Left cardiac atrium (tissue), 4 donors: ENCODE measurements at regions of chr1 and their contacts with region 1.

Region 1: GRCh38 chr1:62082456-62083363 is 111.9 kb upstream of the L1TD1 start:
- DNase-seq: peak; percentile 26
- ATAC-seq: peak in 1 of 2 donors; percentile 62

Region 2: GRCh38 chr1:61797045-61797755 is 285.5 kb before region 1 on chr1:
- intact Hi-C with region 1: no loop called
- DNase-seq: no peak
- ATAC-seq: no peak

Region 3: DNA sequence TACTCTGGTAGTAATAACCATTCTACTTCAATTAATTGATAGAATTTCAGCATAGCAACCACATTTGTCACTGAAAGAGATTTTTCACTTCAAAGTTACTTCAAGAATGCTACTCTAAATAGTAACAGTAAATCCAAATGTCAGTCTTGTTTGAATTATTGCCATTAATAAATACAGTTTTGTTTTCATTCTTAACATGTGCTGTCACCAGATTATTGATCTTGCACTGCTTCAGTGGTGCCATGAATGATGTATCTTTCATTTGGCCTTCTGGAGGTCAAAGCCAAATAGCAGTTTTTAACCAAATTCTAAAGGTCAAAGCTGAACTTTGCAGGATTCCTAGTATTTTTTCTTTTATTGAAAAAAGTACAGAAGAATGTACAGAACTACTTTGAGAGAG is 140.9 kb before region 1 on chr1:
- intact Hi-C with region 1: loop called in 1 of 2 experiments (anchors 10 kb)
- DNase-seq: no peak
- ATAC-seq: no peak

Region 4: GRCh38 chr1:62131093-62131725 is 48.5 kb after region 1 on chr1:
- intact Hi-C with region 1: loop called in 1 of 2 experiments (anchors 5 kb)
- DNase-seq: no peak
- ATAC-seq: peak; percentile 63 to 84